Natural killer cell (primary cell): ENCODE measurements at regions of chr11 and their contacts with region 1.

Region 1: GRCh38 chr11:47248664-47249377 is at the start of gene ACP2:
- DNase-seq: peak; percentile 86 to 93
- ATAC-seq: peak; percentile 97 to 98 (median 97)
- H3K4me3 ChIP-seq: peak within 1 kb of the TSS; percentile 70
- H3K4me3 Mint-ChIP-seq: peak within 1 kb of the TSS; percentile 99
- H3K27ac ChIP-seq: peak within 1 kb of the TSS; percentile 61
- H3K27ac Mint-ChIP-seq: peak within 1 kb of the TSS; percentile 94 to 98
- H3K4me1 ChIP-seq: peaks cover 25% of the 10 kb centered on the region
- H3K4me1 Mint-ChIP-seq: peaks cover 26% of the 10 kb centered on the region in 2 donors
- H3K27me3 ChIP-seq: no peaks in the 10 kb centered on the region
- H3K27me3 Mint-ChIP-seq: no peaks in the 10 kb centered on the region
- CTCF ChIP-seq: no peak
- total RNA-seq, gene ACP2: 15.5 to 21.9 (median 16.8) TPM

Region 2: DNA sequence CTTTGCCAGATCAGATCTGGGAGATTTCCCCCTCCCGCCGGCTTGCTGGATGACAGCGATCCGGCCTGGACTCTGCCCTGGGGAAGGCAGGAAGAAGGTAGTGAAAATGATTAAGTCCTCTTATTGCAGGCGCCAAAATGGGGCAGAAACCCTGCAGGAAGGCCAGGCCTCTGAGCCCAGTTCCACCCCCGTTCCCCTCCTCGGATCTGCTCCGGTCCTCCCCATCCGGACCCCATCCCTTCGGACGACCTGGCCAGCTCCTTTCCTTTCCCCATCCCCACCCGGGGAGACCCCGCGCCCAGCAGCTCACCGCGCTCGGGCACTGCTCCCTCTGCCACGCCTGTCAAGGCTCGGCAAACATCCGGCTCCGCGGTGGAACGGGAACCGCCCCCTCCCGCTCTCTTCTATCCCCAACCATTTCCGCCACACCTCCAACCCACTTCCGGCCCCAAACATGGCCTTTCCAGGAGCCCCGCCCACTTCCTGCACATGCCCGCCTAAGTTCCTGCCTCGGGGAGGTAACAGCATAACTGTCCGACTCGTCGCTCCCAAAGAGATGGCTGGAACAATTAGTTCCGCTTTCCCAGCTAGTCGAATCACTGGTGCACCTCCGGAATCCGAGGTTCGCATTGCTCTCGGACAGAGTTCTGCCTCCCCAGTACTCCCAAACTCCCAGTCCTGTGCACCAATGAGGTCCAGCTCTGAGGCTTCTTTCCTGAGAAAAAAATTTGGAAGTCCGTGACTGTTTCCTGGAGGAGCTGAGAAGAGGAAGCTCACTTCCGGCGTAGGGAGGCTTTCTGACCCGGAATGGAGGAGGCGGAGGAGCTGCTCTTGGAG is 548.4 kb before region 1 on chr11 and contains the starts of genes ARHGAP1 and ZNF408:
- intact Hi-C with region 1: loop called (anchors 2 kb)
- DNase-seq: peak; percentile 97 to 100
- ATAC-seq: peak; percentile 97 to 99 (median 98)
- H3K4me3 ChIP-seq: peak within 1 kb of the TSS; percentile 85
- H3K4me3 Mint-ChIP-seq: peak within 1 kb of the TSS; percentile 97
- H3K27ac ChIP-seq: peak within 1 kb of the TSS; percentile 53
- H3K27ac Mint-ChIP-seq: peak within 1 kb of the TSS; percentile 84 to 94
- H3K4me1 ChIP-seq: peaks cover 44% of the 10 kb centered on the region
- H3K4me1 Mint-ChIP-seq: peaks cover 32 to 56% of the 10 kb centered on the region in 2 donors
- H3K27me3 ChIP-seq: no peaks in the 10 kb centered on the region
- H3K27me3 Mint-ChIP-seq: no peaks in the 10 kb centered on the region
- CTCF ChIP-seq: no peak
- total RNA-seq, gene ARHGAP1: 89.8 to 111 (median 102) TPM
- total RNA-seq, gene ZNF408: 9.1 to 19.0 (median 9.6) TPM

Region 3: DNA sequence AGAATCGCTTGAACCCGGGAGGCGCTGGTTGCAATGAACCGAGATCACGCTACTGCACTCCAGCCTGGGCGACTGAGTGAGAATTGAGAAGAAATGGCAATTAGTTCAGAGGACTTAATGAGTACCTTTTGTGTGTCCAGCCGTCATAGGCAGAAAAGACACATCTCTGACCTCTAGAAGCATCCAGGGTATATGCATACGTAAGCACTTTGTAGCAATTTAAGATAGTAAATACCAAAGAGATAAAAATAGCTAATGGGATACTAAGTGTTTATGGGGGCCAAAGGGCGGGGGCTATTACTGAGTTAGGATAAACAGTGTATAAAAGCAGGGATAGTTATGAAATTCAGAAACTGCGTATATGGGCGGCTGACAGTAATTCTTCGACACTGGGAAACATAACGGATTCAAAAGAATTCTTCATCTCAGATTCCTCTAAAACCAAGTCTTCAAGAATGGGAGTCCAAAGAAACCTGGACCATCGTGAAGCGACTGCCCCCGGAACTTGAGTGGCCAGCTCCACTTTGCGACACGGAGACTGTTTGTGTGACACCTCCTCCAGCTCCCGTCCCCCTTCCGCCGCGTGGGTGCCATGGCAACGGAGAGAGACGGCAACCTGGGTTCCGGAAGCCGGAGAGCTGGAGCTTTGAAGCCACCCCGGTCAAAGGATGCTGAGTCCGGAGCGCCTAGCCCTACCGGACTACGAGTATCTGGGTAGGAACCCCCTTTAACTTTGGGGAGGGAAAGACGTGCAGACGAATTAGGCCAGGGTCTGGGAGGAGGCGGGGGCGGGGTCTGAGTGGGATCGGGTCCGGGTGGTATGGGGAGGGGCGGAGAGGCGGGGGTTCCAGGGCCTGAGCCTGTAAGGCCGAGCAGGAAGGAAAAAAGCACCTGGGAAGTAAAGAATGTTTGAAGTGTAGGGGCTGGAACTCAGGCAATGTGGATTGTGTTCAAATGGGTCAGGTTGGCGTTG is 312.4 kb before region 1 on chr11 and contains the start of gene CSTPP1:
- intact Hi-C with region 1: loop called (anchors 2 kb)
- DNase-seq: peak; percentile 88 to 97
- ATAC-seq: peak; percentile 94 to 99 (median 98)
- H3K4me3 ChIP-seq: peak within 1 kb of the TSS; percentile 62
- H3K4me3 Mint-ChIP-seq: peak within 1 kb of the TSS; percentile 95
- H3K27ac ChIP-seq: peak within 1 kb of the TSS; percentile 54
- H3K27ac Mint-ChIP-seq: peak within 1 kb of the TSS; percentile 90 to 92
- H3K4me1 ChIP-seq: peaks cover 15% of the 10 kb centered on the region
- H3K4me1 Mint-ChIP-seq: peaks cover 12 to 25% of the 10 kb centered on the region in 2 donors
- H3K27me3 ChIP-seq: peaks cover 2% of the 10 kb centered on the region
- H3K27me3 Mint-ChIP-seq: peaks cover 5 to 9% of the 10 kb centered on the region in 2 donors
- CTCF ChIP-seq: no peak
- total RNA-seq, gene CSTPP1: 16.2 to 17.8 (median 16.9) TPM

Region 4: GRCh38 chr11:47213985-47214564 is 34.7 kb before region 1 on chr11:
- intact Hi-C with region 1: loop called (anchors 2 kb)
- DNase-seq: peak; percentile 65 to 89
- ATAC-seq: peak; percentile 67 to 90 (median 82)
- H3K4me3 ChIP-seq: peak overlapping the region; percentile 98
- H3K4me3 Mint-ChIP-seq: peak overlapping the region; percentile 99
- H3K27ac ChIP-seq: peak overlapping the region; percentile 96
- H3K27ac Mint-ChIP-seq: peak overlapping the region; percentile 95 to 98
- H3K4me1 ChIP-seq: peaks cover 32% of the 10 kb centered on the region
- H3K4me1 Mint-ChIP-seq: peaks cover 30 to 36% of the 10 kb centered on the region in 2 donors
- H3K27me3 ChIP-seq: no peaks in the 10 kb centered on the region
- H3K27me3 Mint-ChIP-seq: no peaks in the 10 kb centered on the region
- CTCF ChIP-seq: no peak

Region 5: GRCh38 chr11:47269002-47269828 is 20.4 kb after region 1 on chr11:
- intact Hi-C with region 1: loop called (anchors 1 kb)
- DNase-seq: peak; percentile 79 to 91
- ATAC-seq: peak; percentile 54 to 82 (median 68)
- H3K4me3 ChIP-seq: peak overlapping the region; percentile 58
- H3K4me3 Mint-ChIP-seq: peak overlapping the region; percentile 92
- H3K27ac ChIP-seq: peak overlapping the region; percentile 94
- H3K27ac Mint-ChIP-seq: peak overlapping the region; percentile 76 to 87
- H3K4me1 ChIP-seq: peaks cover 54% of the 10 kb centered on the region
- H3K4me1 Mint-ChIP-seq: peaks cover 54 to 56% of the 10 kb centered on the region in 2 donors
- H3K27me3 ChIP-seq: no peaks in the 10 kb centered on the region
- H3K27me3 Mint-ChIP-seq: no peaks in the 10 kb centered on the region
- CTCF ChIP-seq: no peak

Region 6: GRCh38 chr11:47477323-47477722 is 228.5 kb after region 1 on chr11:
- intact Hi-C with region 1: no loop called
- DNase-seq: no peak
- ATAC-seq: no peak
- H3K4me3 ChIP-seq: no peak overlapping the region
- H3K4me3 Mint-ChIP-seq: no peak overlapping the region
- H3K27ac ChIP-seq: no peak overlapping the region
- H3K27ac Mint-ChIP-seq: peak overlapping the region in 1 of 2 donors; percentile 61
- H3K4me1 ChIP-seq: no peaks in the 10 kb centered on the region
- H3K4me1 Mint-ChIP-seq: peaks cover 0 to 14% of the 10 kb centered on the region in 2 donors
- H3K27me3 ChIP-seq: no peaks in the 10 kb centered on the region
- H3K27me3 Mint-ChIP-seq: no peaks in the 10 kb centered on the region
- CTCF ChIP-seq: no peak